GM12878 (cell line): ENCODE measurements at regions of chr4 and their contacts with region 1.

Region 1: DNA sequence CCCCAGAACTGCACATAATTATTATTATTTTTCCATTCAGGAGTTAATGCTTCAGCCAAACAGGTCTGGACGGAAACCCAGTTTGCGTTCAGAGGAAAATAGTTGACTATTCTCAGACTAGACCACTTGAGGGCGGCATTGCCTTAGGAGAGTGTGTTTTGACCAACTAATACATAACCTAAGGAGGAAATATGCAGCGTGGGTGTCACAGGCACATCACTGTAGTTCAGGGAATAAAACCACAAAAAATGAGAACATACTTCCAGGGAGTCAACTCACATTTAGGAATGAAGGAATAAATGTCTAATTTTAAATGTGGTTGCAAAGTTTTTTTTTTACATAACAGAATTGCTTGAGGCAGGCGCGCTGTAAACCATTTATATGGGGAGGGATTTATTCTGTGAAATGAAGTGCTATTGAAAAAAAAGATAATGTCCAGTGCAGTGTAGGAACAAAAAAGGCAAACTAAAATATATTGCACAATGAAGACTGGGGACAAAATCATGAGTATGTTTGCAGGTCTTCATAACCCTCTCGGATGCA is 93.3 kb downstream of the SYNPO2 start:
- DNase-seq: no peak
- ATAC-seq: peak; percentile 94
- H3K4me3 ChIP-seq: no peak overlapping the region
- H3K27ac ChIP-seq: no peak overlapping the region
- H3K4me1 ChIP-seq: no peaks in the 10 kb centered on the region
- H3K27me3 ChIP-seq: no peaks in the 10 kb centered on the region
- CTCF ChIP-seq: peak; percentile 70 to 80 (median 79)
- EP300 ChIP-seq: no peak
- POLR2A ChIP-seq: no peak
- RAD21 ChIP-seq: peak; percentile 98

Region 2: GRCh38 chr4:119041951-119042560 is 60.1 kb after region 1 on chr4:
- CTCF ChIA-PET with region 1: interaction called, 24 read pairs
- POLR2A ChIA-PET with region 1: no interaction called
- RAD21 ChIA-PET with region 1: interaction called, 4 read pairs
- SMC1A ChIA-PET with region 1: interaction called, 3 read pairs
- in situ Hi-C with region 1: no loop called
- intact Hi-C with region 1: loop called (anchors 2 kb)
- DNase-seq: peak; percentile 12
- ATAC-seq: peak; percentile 95
- H3K4me3 ChIP-seq: no peak overlapping the region
- H3K27ac ChIP-seq: no peak overlapping the region
- H3K4me1 ChIP-seq: peaks cover 6% of the 10 kb centered on the region; the same call in 1 of the 2 replicates
- H3K27me3 ChIP-seq: peaks cover 0 to 2% of the 10 kb centered on the region in 2 experiments; a peak in 1 of 4 replicates
- CTCF ChIP-seq: peak; percentile 57 to 62 (median 58)
- EP300 ChIP-seq: no peak
- POLR2A ChIP-seq: no peak
- RAD21 ChIP-seq: peak; percentile 78